Activated T-helper 1 cell treated with anti-CD3 and anti-CD28 coated beads, Interleukin-12 subunit alpha, Interleukin-12 subunit beta, Interleukin-2, Interleukin-4 antibody, amounts not matched to agents 30 ng/mL and 10 ng/mL and 1 ng/mL, durations not matched to agents 14 hours and 24 hours and 36 hours (primary cell): ENCODE measurements at regions of chr5 and their contacts with region 1.

Region 1: GRCh38 chr5:87400305-87400899 is 12.3 kb downstream of the CCNH start:
- DNase-seq: no peak
- H3K4me3 Mint-ChIP-seq: no peak overlapping the region
- H3K27ac Mint-ChIP-seq: no peak overlapping the region
- H3K4me1 Mint-ChIP-seq: peaks cover 24% of the 10 kb centered on the region
- H3K27me3 Mint-ChIP-seq: no peaks in the 10 kb centered on the region

Region 2: GRCh38 chr5:86880785-86881492 is 519.5 kb before region 1 on chr5:
- intact Hi-C with region 1: loop called (anchors 1 kb)
- DNase-seq: peak; percentile 23
- H3K4me3 Mint-ChIP-seq: no peak overlapping the region
- H3K27ac Mint-ChIP-seq: no peak overlapping the region
- H3K4me1 Mint-ChIP-seq: no peaks in the 10 kb centered on the region
- H3K27me3 Mint-ChIP-seq: peaks cover 14% of the 10 kb centered on the region

Region 3: DNA sequence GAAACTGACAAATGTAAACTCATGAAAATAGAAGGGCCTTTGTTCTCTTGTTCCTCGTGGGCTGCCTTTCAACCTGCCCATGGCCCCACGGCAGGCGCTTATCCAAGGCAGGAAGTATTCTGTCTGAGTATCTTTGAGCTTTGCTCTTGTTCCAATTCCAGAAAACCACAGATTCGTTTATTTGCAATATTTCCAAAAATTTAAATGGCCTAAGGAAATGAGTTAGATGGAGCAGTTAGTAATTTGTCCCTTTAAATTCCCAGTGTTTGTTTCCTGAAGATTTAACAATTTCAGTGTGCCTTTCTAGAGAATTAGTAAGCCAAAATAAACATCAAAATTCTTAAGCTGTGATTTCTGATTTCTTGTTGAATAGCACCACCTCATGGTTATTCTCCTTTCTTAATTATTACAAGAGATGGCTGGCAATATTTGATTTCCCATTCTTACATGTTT is 432.1 kb before region 1 on chr5:
- intact Hi-C with region 1: loop called (anchors 1 kb)
- DNase-seq: no peak
- H3K4me3 Mint-ChIP-seq: no peak overlapping the region
- H3K27ac Mint-ChIP-seq: no peak overlapping the region
- H3K4me1 Mint-ChIP-seq: no peaks in the 10 kb centered on the region
- H3K27me3 Mint-ChIP-seq: peaks cover 16% of the 10 kb centered on the region

Region 4: GRCh38 chr5:86986837-86987236 is 413.6 kb before region 1 on chr5:
- intact Hi-C with region 1: loop called (anchors 5 kb)
- DNase-seq: no peak
- H3K4me3 Mint-ChIP-seq: no peak overlapping the region
- H3K27ac Mint-ChIP-seq: no peak overlapping the region
- H3K4me1 Mint-ChIP-seq: no peaks in the 10 kb centered on the region
- H3K27me3 Mint-ChIP-seq: peaks cover 15% of the 10 kb centered on the region

Region 5: DNA sequence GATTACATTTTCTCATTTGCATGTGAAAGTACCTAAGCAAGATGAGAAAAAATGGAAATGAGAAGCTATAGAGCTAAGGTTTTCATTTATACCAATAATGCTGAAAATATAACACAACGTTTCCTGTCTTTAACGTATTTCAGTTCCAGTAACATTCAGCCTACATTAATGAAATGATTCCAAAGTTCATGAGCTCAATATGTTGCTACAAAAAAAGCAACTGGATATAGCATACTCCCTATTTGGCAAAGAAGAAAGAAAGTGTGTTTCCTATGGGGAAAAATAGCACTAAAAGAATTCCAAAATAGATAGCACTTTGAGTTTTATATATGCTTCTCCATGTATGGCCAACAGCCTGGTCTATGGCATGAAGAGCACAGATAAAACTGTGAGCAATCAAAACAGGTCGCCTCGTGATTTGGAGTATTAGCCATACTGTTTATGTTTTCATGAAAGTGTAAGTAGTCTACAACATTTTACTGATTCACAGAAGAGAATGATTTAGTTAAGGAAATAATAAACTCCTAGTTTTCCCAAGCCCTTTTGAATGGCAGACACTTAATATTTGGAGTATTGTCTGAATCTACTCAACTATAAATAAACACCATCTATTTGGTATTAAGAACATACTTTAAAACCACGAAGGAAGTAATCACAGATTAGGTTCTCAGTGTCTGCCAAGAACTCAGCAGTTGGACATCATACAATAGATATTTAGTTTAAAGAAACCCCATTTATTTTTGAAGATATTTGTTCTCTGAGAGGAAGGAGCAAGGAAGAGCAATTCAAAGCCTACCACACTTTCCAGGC is 391.4 kb before region 1 on chr5:
- intact Hi-C with region 1: loop called (anchors 5 kb)
- DNase-seq: no peak
- H3K4me3 Mint-ChIP-seq: no peak overlapping the region
- H3K27ac Mint-ChIP-seq: no peak overlapping the region
- H3K4me1 Mint-ChIP-seq: no peaks in the 10 kb centered on the region
- H3K27me3 Mint-ChIP-seq: peaks cover 20% of the 10 kb centered on the region

Region 6: DNA sequence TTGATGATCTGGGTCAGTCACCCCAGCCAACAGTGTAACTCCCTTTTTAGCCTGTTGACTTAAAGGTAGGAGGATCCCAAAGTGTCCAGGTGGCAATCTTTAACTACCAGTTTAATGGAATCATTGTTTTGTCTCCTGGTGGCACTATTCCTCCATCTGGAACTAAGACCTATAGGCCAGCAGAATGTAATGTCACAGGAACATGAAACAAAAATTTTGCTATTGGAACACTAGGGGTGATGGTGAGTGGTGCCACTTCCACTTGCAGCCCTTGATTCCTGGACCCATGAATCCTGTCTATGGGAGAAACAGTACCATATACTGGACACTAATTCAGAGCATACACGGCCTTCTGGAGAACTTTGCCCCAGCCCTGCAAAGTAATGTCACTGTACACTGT is 352.2 kb before region 1 on chr5:
- intact Hi-C with region 1: loop called (anchors 1 kb)
- DNase-seq: no peak
- H3K4me3 Mint-ChIP-seq: no peak overlapping the region
- H3K27ac Mint-ChIP-seq: no peak overlapping the region
- H3K4me1 Mint-ChIP-seq: no peaks in the 10 kb centered on the region
- H3K27me3 Mint-ChIP-seq: peaks cover 6% of the 10 kb centered on the region

Region 7: GRCh38 chr5:87340716-87341115 is 59.7 kb before region 1 on chr5:
- intact Hi-C with region 1: loop called (anchors 2 kb)
- DNase-seq: no peak
- H3K4me3 Mint-ChIP-seq: peak overlapping the region; percentile 70
- H3K27ac Mint-ChIP-seq: peak overlapping the region; percentile 86
- H3K4me1 Mint-ChIP-seq: peaks cover 32% of the 10 kb centered on the region
- H3K27me3 Mint-ChIP-seq: no peaks in the 10 kb centered on the region